Mammary epithelial cell (primary cell): ENCODE measurements at regions of chr2 and their contacts with region 1.

Region 1: GRCh38 chr2:237403024-237403882 is 10.7 kb downstream of the COL6A3 start:
- DNase-seq: no peak
- H3K4me3 ChIP-seq: no peak overlapping the region
- H3K27ac ChIP-seq: no peak overlapping the region
- H3K4me1 ChIP-seq: no peaks in the 10 kb centered on the region
- H3K27me3 ChIP-seq: no peaks in the 10 kb centered on the region
- CTCF ChIP-seq: no peak

Region 2: DNA sequence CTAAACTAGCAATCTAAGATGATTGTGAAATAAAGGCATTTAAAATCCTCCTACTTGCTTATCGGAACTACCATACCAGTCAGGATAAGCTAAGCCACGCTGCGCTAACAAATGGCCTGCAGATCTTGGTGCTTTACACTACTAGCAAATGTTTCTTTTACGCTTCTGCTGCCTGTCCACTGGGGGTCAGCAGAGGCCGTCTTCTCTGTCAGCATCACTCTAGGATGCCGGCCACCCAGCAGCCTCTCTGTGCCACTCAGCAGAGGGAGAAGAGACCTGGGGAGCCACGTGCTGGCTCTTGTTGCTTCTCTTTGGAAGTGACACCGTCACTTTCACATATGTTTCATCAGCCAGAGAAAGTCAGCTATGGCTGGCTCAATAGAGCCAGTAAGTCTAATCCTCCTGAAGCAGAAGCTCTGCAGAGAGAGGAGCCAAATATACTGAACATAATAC is 281.0 kb before region 1 on chr2:
- CTCF ChIA-PET with region 1: no interaction called
- dilution Hi-C with region 1: no loop called
- in situ Hi-C with region 1: no loop called
- intact Hi-C with region 1: no loop called
- DNase-seq: peak; percentile 54
- H3K4me3 ChIP-seq: no peak overlapping the region
- H3K27ac ChIP-seq: no peak overlapping the region
- H3K4me1 ChIP-seq: peaks cover 21% of the 10 kb centered on the region
- H3K27me3 ChIP-seq: no peaks in the 10 kb centered on the region
- CTCF ChIP-seq: peak; percentile 67 to 79

Region 3: DNA sequence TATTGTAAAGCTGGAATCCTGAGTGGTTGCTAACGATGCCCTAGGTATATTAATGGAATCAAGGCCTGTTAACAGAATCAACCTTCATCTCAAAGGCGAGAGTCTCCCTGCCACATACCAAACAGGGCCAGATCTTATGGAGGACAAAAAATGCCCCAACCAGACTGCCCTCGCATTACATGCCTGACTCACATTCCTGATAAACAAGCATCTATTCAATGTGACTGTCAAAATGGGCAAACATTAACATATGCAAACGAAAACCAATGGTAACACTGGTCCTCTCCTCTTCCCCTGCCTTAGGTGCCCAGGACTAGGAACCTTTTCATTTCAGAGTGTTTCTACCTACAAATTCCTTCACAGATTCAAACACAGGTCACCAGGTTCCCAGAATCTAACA is 72.7 kb before region 1 on chr2:
- CTCF ChIA-PET with region 1: no interaction called
- dilution Hi-C with region 1: loop called (anchors 5 kb)
- in situ Hi-C with region 1: no loop called
- intact Hi-C with region 1: no loop called
- DNase-seq: no peak
- H3K4me3 ChIP-seq: no peak overlapping the region
- H3K27ac ChIP-seq: no peak overlapping the region
- H3K4me1 ChIP-seq: no peaks in the 10 kb centered on the region
- H3K27me3 ChIP-seq: no peaks in the 10 kb centered on the region
- CTCF ChIP-seq: no peak